GM10248 (cell line): ENCODE measurements at regions of chr12 and their contacts with region 1.

Region 1: DNA sequence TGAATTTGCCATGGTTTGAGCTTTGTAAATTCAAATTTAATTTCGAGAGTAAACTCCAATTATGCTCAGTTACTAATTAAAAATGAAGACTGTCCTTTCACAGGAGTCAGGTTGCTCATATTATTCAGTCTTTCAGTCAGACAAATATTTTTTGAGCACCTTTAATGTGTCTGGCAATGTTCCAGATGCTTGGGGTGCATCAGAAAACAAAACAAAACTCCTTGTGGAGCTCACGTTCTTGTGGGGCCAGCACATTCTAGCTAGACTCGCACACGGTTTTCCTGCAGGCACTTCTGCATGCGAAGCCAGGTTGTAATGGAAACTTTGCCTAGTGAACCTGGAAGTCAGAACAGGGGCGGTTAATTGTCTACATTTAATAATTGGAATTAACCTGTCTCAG is 64.0 kb upstream of the ATF1 start:
- DNase-seq: no peak
- CTCF ChIP-seq: no peak

Region 2: GRCh38 chr12:50689437-50689836 is 10.5 kb before region 1 on chr12:
- CTCF ChIA-PET with region 1: interaction called, 15 read pairs
- POLR2A ChIA-PET with region 1: no interaction called
- DNase-seq: no peak
- CTCF ChIP-seq: no peak

Region 3: DNA sequence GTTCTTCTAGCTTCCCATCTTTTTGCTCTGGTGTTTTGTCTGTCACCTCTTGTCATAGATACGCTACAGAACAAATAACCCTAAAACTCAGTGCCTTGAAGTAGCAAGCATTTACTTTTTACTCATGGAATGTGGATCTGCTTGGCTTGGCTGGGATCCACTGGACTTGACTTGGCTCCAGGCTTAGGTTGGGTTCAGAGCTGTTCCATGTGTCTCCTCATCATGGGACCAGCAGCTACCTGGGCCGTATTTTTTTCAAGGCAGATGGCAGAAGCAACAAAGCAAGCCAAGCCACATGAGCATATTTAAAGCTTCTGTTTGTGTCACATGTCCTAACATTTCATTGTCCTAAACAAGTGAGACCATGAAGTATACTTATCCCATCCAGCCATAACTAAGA is 15.2 kb after region 1 on chr12:
- CTCF ChIA-PET with region 1: interaction called, 14 read pairs
- POLR2A ChIA-PET with region 1: no interaction called
- DNase-seq: no peak
- CTCF ChIP-seq: no peak

Region 4: DNA sequence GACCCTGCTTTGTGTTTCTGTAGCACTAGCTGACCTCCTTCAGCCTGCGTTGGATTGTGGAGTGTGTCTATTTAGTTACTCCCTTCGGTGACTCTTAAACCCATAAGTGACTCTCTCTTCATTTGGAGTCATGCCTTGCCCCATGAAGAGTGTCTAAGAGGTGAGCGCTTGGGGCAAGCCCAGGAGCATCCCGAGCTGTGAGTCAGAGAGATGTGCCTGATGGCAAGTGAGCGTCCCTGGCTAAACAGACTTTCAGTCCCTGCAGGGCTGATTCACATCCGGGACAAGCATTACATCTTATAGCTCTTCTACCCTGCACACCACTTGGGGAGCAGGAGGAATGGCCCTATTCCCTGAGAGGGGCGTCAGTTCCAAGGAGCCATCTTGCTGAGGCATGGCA is 39.7 kb after region 1 on chr12:
- CTCF ChIA-PET with region 1: no interaction called
- POLR2A ChIA-PET with region 1: no interaction called
- DNase-seq: no peak
- CTCF ChIP-seq: no peak

Region 5: GRCh38 chr12:50753320-50753719 is 53.4 kb after region 1 on chr12:
- CTCF ChIA-PET with region 1: no interaction called
- POLR2A ChIA-PET with region 1: no interaction called
- DNase-seq: no peak
- CTCF ChIP-seq: no peak